Posterior vena cava (tissue), 2 donors: ENCODE measurements at regions of chr7 and their contacts with region 1.

Region 1: GRCh38 chr7:46589286-46589685 is 668.2 kb upstream of the IGFBP3 start:
- DNase-seq: no peak

Region 2: DNA sequence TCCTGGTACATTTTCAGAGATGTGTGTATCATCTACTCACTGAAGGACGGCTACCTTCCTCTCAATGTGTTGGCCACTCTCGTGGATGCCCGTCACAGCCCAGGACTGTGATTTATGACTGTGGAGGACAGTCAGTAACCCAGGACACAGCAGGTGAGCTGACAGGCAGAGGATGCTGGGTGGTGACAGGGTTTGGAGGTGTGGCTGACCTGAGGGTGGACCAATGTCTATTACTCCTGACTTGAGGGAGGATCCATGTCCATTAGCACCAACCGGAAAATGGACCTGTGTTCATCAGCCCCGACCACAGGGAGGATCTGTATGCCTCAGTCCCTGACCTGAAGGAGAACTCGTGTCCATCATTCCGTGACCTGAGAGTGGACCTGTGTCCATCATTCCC is 919.1 kb before region 1 on chr7:
- intact Hi-C with region 1: no loop called
- DNase-seq: no peak

Region 3: GRCh38 chr7:46626691-46627310 is 37.5 kb after region 1 on chr7:
- intact Hi-C with region 1: loop called in 1 of 2 experiments (anchors 1 kb)
- DNase-seq: no peak

Region 4: DNA sequence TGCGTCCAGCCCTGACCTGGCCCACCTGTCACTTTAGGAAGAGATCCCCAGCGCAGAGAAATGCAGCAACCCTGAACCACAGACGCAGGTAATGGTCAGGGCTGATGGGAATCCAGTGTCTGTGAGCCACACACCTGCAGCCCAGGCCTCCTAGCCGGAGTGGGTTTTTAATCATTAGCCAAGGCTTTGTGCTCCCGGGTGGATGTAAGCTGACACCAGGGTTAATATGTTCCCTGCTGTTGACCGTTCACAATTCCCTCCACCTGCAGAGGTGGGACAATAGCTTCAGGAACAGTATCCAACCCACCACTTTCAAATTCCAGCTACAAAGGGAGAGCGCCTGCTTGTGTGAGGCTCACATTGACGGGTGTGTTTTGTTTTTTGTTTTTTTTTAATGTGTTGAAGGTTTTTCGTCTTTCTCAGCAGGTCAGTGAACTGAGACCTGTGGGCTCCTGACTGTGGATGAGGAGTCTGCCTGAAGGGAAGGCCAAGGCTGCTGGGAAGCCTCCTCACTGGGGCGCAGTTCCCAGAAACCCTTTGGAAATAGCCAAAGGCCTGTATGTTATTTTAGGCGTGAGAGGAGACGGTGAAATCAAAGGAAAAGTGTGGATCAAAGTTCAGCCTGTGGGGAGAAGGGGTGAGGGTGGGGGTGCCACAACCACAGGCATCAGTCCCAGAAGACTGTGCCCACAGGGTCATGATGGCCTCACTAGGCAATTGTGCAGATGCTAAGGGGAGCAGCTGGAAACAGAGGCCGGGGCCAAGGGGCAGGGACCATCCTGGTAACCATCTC is 881.5 kb after region 1 on chr7:
- intact Hi-C with region 1: no loop called
- DNase-seq: peak; percentile 38